ENCODE measurements at regions of chr1 and their contacts with region 1.

Region 1: GRCh38 chr1:113904674-113905434 is at the starts of genes AP4B1 and DCLRE1B:
- DNase-seq: peak; percentile 100
- H3K4me3 ChIP-seq: peak within 1 kb of the TSS; percentile 55 to 86 (median 60)
- H3K27ac ChIP-seq: peak within 1 kb of the TSS; percentile 72
- H3K4me1 ChIP-seq: peaks cover 12% of the 10 kb centered on the region
- H3K27me3 ChIP-seq: no peaks in the 10 kb centered on the region
- CTCF ChIP-seq: peak; percentile 60 to 73
- POLR2A ChIP-seq: peak; percentile 96
- total RNA-seq, gene AP4B1: 29.4 and 33.0 TPM in 2 replicates
- total RNA-seq, gene DCLRE1B: 10.7 and 10.8 TPM in 2 replicates

Region 2: DNA sequence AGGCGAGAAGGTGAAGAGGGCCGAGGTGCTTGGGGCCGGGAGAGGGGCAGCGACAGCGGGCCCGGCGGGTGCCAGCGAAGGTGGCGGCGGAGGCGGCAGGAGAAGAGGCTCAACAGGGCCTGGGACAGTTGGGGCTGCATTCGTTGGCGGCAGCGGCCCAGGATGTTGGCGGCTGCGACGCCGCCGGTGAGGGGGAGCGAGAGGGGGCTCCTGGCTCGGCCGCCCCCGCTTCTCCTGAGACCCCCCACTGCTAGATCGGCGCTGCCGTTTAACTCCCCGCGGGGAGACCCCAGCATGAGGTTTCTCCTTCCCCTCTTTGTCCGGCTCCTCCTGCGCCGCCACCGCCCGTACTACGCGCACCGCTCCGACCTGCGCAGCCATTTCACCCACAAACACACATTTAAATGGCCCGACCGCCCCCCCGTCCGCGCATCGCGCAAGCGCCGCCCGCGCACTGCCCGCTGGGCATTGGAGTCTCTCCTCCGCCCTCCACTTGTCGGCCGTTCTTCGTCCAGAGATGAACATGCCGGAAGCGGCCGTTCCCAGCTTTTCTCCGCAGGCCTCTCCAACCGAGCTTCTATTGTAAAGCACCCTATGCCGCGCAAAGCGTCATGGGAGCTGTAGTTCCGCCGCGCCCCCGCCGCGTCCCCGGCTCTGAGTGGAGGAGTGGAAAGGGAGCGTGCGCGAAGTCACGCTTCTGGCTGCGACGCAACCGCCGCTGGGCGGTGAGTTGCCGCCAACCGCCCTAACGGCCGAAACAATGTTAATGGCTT is 92.8 kb before region 1 on chr1 and contains the start of gene RSBN1:
- CTCF ChIA-PET with region 1: no interaction called
- POLR2A ChIA-PET with region 1: interaction called, 7 read pairs
- dilution Hi-C with region 1: no loop called
- intact Hi-C with region 1: loop called (anchors 1 kb)
- DNase-seq: peak; percentile 100
- H3K4me3 ChIP-seq: peak within 1 kb of the TSS; percentile 65 to 97 (median 74)
- H3K27ac ChIP-seq: peak within 1 kb of the TSS; percentile 81
- H3K4me1 ChIP-seq: peaks cover 26% of the 10 kb centered on the region
- H3K27me3 ChIP-seq: no peaks in the 10 kb centered on the region
- CTCF ChIP-seq: peak in 1 of 2 donors; percentile 8
- POLR2A ChIP-seq: peak; percentile 89
- total RNA-seq, gene RSBN1: 10.8 and 13.4 TPM in 2 replicates

Region 3: DNA sequence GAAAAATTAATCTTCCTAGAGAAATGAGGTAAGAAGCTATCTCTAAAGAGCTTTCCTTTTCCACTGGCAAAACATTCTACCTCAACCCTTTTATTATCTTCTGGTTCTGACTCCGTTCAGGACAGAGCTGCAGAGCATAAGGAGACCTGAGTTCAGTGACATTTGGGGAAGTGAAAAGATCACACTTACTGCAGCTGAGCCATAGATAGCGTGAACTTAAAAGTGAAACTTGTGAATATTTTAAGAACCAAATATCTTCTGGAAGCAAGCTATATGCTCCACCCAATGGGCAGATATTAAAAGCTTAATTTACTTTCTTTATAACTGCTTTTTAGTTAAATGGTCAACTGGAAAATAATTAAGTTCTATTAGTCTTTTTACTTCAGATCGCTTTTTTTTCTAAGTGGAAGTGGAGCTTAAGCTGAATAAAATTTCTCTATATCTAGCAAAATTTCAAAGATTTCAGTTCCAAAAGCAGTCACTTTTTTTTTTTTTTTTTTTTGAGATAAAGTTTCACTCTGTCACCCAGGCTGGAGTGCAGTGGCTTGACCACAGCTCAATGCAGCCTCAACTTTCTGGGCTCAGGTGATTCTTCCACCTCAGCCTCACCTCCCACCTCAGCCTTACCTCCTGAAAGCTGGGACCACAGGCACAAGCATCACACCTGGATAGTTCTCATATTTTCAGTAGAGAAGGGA is 45.2 kb before region 1 on chr1:
- CTCF ChIA-PET with region 1: interaction called, 5 read pairs
- POLR2A ChIA-PET with region 1: interaction called, 5 read pairs
- dilution Hi-C with region 1: no loop called
- intact Hi-C with region 1: loop called (anchors 1 kb)
- DNase-seq: no peak
- H3K4me3 ChIP-seq: no peak overlapping the region
- H3K27ac ChIP-seq: peak overlapping the region; percentile 74
- H3K4me1 ChIP-seq: peaks cover 14% of the 10 kb centered on the region
- H3K27me3 ChIP-seq: no peaks in the 10 kb centered on the region
- CTCF ChIP-seq: no peak
- POLR2A ChIP-seq: no peak

Measured in endothelial cell of umbilical vein (primary cell).